GM10248 (cell line): ENCODE measurements at regions of chr2 and their contacts with region 1.

Region 1: GRCh38 chr2:68467077-68467960 is at the starts of genes APLF and FBXO48:
- DNase-seq: peak; percentile 96
- CTCF ChIP-seq: no peak

Region 2: GRCh38 chr2:68441179-68441993 is 25.9 kb before region 1 on chr2:
- CTCF ChIA-PET with region 1: interaction called, 66 read pairs
- POLR2A ChIA-PET with region 1: no interaction called
- DNase-seq: peak; percentile 78
- CTCF ChIP-seq: peak; percentile 82

Region 3: GRCh38 chr2:68487773-68488355 is 20.5 kb after region 1 on chr2:
- CTCF ChIA-PET with region 1: interaction called, 15 read pairs
- POLR2A ChIA-PET with region 1: interaction called, 4 read pairs
- DNase-seq: peak; percentile 38
- CTCF ChIP-seq: peak; percentile 33

Region 4: GRCh38 chr2:68689553-68690537 is 222.5 kb after region 1 on chr2:
- CTCF ChIA-PET with region 1: interaction called, 18 read pairs
- POLR2A ChIA-PET with region 1: no interaction called
- DNase-seq: peak; percentile 68
- CTCF ChIP-seq: no peak

Region 5: GRCh38 chr2:68715353-68716041 is 248.2 kb after region 1 on chr2:
- CTCF ChIA-PET with region 1: interaction called, 25 read pairs
- POLR2A ChIA-PET with region 1: no interaction called
- DNase-seq: peak; percentile 49
- CTCF ChIP-seq: peak; percentile 66

Region 6: DNA sequence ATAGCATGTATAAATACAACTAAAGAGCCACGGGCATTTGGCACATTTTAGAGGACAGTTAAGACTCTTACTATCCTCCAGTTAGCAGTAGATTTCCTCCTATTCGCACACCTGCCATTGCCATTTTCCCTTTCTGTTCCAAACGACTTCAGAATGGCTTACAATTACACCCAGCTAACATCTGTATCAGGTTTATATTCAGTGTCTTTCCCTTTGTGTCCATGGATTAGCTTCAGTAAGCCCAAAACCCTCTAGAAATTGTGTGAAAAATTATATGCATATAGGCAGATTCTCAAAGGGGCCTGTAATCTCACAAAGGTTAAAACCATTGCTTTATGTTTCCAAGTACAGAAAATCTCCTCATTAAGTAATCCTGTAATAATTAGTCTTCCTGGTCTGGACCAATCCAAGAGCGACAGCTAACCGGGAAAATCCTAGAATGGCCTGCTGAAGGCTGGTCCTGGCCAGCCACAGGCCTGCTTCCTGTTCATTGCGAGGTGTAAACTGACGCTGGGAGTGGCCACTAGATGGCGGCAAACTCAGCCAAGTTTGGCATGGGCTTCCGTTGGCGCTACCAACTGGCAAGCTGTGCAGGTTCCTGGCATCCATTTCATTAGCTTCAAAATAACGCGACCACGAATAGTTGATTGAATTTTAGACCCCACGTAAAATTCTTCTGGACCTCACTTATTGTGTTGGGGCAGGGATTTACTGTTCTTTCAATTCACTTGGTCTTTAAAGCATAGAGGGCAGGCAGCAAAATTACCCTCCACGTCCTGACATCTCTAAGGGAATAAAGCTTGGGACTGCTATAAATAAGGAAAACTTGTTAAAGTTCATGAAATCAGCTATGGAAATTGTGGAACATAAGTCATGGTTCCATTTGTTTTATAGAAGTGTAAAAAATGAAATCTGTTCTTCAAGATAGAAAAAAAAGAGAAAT is 284.3 kb after region 1 on chr2:
- CTCF ChIA-PET with region 1: interaction called, 14 read pairs
- POLR2A ChIA-PET with region 1: no interaction called
- DNase-seq: peak; percentile 75
- CTCF ChIP-seq: peak; percentile 96

Region 7: DNA sequence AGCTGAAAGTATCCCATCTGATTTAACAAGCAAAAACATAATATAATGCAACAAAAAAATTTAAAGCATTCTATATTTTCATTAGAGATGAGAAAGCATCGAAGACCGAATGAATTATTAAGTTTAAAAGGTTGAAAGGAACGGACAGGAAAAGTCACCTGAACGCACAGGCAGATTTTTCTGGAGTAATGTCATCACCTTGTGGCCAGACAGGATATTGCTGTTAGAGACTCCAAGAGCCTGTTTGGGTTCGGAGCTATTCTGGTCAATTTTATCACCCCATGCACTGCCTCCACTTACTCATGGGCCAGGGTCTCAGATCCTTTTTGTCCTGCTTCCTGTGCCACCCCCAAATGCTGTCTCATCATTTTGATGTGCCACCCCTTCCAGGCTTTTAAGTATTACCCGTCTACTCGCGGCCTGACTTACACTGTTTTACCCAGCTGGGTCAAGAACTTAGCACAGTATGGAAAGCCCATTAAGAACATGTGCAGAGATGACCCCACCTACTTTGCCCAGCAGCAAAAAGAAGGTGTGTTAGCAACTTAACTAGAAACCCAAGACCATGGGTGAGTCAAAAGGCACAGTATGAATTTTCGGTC is 458.1 kb after region 1 on chr2:
- CTCF ChIA-PET with region 1: interaction called, 88 read pairs
- POLR2A ChIA-PET with region 1: no interaction called
- DNase-seq: peak; percentile 58
- CTCF ChIP-seq: peak; percentile 86